Body of pancreas (tissue), 4 donors: ENCODE measurements at regions of chr13 and their contacts with region 1.

Region 1: GRCh38 chr13:95301183-95301967 is at the start of gene ABCC4:
- DNase-seq: peak; percentile 60 to 76 (median 66)
- ATAC-seq: peak; percentile 81
- H3K4me3 ChIP-seq: peak within 1 kb of the TSS; percentile 53 to 67
- H3K27ac ChIP-seq: peak within 1 kb of the TSS; percentile 13 to 73 (median 55)
- H3K4me1 ChIP-seq: peaks cover 36% of the 10 kb centered on the region
- H3K27me3 ChIP-seq: no peaks in the 10 kb centered on the region
- CTCF ChIP-seq: peak in 2 of 7 experiments; percentile 24 to 30
- POLR2A ChIP-seq: peak in 1 of 3 donors; percentile 34
- total RNA-seq, gene ABCC4: 5.4 to 6.6 TPM

Region 2: GRCh38 chr13:94842901-94843300 is 458.5 kb before region 1 on chr13:
- intact Hi-C with region 1: no loop called
- DNase-seq: no peak
- ATAC-seq: no peak
- H3K4me3 ChIP-seq: no peak overlapping the region
- H3K27ac ChIP-seq: no peak overlapping the region
- H3K4me1 ChIP-seq: no peaks in the 10 kb centered on the region
- H3K27me3 ChIP-seq: no peaks in the 10 kb centered on the region
- CTCF ChIP-seq: no peak
- POLR2A ChIP-seq: no peak

Region 3: GRCh38 chr13:95378603-95379002 is 77.2 kb after region 1 on chr13:
- intact Hi-C with region 1: loop called (anchors 10 kb)
- DNase-seq: no peak
- ATAC-seq: no peak
- H3K4me3 ChIP-seq: no peak overlapping the region
- H3K27ac ChIP-seq: no peak overlapping the region
- H3K4me1 ChIP-seq: peaks cover 9% of the 10 kb centered on the region
- H3K27me3 ChIP-seq: no peaks in the 10 kb centered on the region
- CTCF ChIP-seq: no peak
- POLR2A ChIP-seq: no peak

Region 4: DNA sequence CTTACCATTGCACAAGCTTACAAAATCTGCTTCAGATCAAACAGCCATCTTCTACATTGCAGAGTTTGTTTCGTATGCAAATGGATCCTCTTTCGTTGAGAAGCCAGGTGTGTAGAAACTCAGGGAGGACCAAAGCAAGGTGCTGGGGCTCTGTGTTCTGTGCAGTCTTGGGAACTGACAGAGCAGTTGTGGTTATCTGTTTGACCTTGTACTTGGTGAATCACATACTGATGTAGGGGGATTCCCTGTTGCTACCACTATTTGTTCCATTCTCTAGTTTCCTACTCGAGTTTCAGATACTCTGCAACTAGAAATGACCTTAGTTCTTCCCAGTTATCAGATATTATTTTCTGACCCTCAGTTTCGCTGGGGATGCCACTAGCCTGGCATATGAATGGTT is 155.9 kb after region 1 on chr13:
- intact Hi-C with region 1: no loop called
- DNase-seq: no peak
- ATAC-seq: no peak
- H3K4me3 ChIP-seq: no peak overlapping the region
- H3K27ac ChIP-seq: no peak overlapping the region
- H3K4me1 ChIP-seq: no peaks in the 10 kb centered on the region
- H3K27me3 ChIP-seq: no peaks in the 10 kb centered on the region
- CTCF ChIP-seq: no peak
- POLR2A ChIP-seq: no peak

Region 5: DNA sequence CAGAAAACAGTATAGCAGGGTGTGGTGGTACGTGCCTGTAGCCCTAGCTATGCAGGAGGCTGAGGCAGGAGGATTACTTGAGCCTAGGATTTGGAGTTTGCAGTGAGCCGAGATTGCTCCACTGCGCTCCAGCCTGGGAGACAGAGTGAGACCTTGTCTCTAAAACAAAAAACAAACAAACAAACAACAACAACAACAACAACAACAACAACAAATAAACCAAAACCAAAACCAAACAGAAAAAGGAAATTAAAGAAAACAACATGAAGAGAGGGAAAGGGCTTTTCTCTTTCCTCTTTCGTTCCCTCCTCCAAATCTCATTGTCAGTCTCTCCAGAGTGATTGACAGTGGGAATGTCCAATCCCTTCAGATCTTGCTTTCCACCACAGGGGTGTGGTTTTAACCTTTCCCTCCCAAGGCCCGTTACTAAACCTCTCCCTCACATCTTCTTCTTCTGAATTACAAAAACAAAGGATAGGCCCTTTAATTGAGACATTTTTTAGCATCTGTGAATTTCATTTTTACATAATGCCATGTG is 1129.7 kb after region 1 on chr13:
- intact Hi-C with region 1: no loop called
- DNase-seq: no peak
- ATAC-seq: no peak
- H3K4me3 ChIP-seq: no peak overlapping the region
- H3K27ac ChIP-seq: no peak overlapping the region
- H3K4me1 ChIP-seq: no peaks in the 10 kb centered on the region
- H3K27me3 ChIP-seq: no peaks in the 10 kb centered on the region
- CTCF ChIP-seq: no peak
- POLR2A ChIP-seq: no peak